Naive thymus-derived CD4-positive, alpha-beta T cell (primary cell): ENCODE measurements at regions of chr10 and their contacts with region 1.

Region 1: GRCh38 chr10:101353692-101354327 is at the start of gene BTRC:
- DNase-seq: peak; percentile 76 to 99 (median 98)
- ATAC-seq: peak; percentile 96
- H3K4me3 ChIP-seq: peak within 1 kb of the TSS; percentile 69
- H3K4me3 Mint-ChIP-seq: peak within 1 kb of the TSS; percentile 93 to 99 (median 98)
- H3K27ac ChIP-seq: peak within 1 kb of the TSS; percentile 94
- H3K27ac Mint-ChIP-seq: peak within 1 kb of the TSS; percentile 94 to 99 (median 98)
- H3K4me1 ChIP-seq: peaks cover 5 to 8% of the 10 kb centered on the region in 2 donors
- H3K4me1 Mint-ChIP-seq: peaks cover 15 to 41% (median 33%) of the 10 kb centered on the region in 7 donors
- H3K27me3 ChIP-seq: no peaks in the 10 kb centered on the region
- H3K27me3 Mint-ChIP-seq: peaks cover 5 to 19% (median 14%) of the 10 kb centered on the region in 5 donors
- total RNA-seq, gene BTRC: 14.7 to 26.1 (median 17.6) TPM

Region 2: GRCh38 chr10:99758211-99758891 is 1595.5 kb before region 1 on chr10:
- CTCF ChIA-PET with region 1: no interaction called
- POLR2A ChIA-PET with region 1: no interaction called
- intact Hi-C with region 1: no loop called
- DNase-seq: no peak
- ATAC-seq: no peak
- H3K4me3 ChIP-seq: no peak overlapping the region
- H3K4me3 Mint-ChIP-seq: no peak overlapping the region
- H3K27ac ChIP-seq: no peak overlapping the region
- H3K27ac Mint-ChIP-seq: no peak overlapping the region
- H3K4me1 ChIP-seq: no peaks in the 10 kb centered on the region
- H3K4me1 Mint-ChIP-seq: no peaks in the 10 kb centered on the region
- H3K27me3 ChIP-seq: no peaks in the 10 kb centered on the region
- H3K27me3 Mint-ChIP-seq: no peaks in the 10 kb centered on the region

Region 3: GRCh38 chr10:100535715-100536353 is 818.0 kb before region 1 on chr10 and contains the start of gene HIF1AN:
- CTCF ChIA-PET with region 1: no interaction called
- POLR2A ChIA-PET with region 1: no interaction called
- intact Hi-C with region 1: loop called (anchors 5 to 10 kb)
- DNase-seq: peak; percentile 70 to 95 (median 91)
- ATAC-seq: peak; percentile 100
- H3K4me3 ChIP-seq: peak within 1 kb of the TSS; percentile 73
- H3K4me3 Mint-ChIP-seq: peak within 1 kb of the TSS in 1 of 10 donors; percentile 9
- H3K27ac ChIP-seq: peak within 1 kb of the TSS; percentile 85
- H3K27ac Mint-ChIP-seq: peak within 1 kb of the TSS in 1 of 9 donors; percentile 57
- H3K4me1 ChIP-seq: peaks cover 24 to 27% of the 10 kb centered on the region in 2 donors
- H3K4me1 Mint-ChIP-seq: peaks cover 0 to 29% (median 10%) of the 10 kb centered on the region in 7 donors
- H3K27me3 ChIP-seq: no peaks in the 10 kb centered on the region
- H3K27me3 Mint-ChIP-seq: no peaks in the 10 kb centered on the region
- total RNA-seq, gene HIF1AN: 43.3 to 74.9 (median 54.8) TPM

Region 4: DNA sequence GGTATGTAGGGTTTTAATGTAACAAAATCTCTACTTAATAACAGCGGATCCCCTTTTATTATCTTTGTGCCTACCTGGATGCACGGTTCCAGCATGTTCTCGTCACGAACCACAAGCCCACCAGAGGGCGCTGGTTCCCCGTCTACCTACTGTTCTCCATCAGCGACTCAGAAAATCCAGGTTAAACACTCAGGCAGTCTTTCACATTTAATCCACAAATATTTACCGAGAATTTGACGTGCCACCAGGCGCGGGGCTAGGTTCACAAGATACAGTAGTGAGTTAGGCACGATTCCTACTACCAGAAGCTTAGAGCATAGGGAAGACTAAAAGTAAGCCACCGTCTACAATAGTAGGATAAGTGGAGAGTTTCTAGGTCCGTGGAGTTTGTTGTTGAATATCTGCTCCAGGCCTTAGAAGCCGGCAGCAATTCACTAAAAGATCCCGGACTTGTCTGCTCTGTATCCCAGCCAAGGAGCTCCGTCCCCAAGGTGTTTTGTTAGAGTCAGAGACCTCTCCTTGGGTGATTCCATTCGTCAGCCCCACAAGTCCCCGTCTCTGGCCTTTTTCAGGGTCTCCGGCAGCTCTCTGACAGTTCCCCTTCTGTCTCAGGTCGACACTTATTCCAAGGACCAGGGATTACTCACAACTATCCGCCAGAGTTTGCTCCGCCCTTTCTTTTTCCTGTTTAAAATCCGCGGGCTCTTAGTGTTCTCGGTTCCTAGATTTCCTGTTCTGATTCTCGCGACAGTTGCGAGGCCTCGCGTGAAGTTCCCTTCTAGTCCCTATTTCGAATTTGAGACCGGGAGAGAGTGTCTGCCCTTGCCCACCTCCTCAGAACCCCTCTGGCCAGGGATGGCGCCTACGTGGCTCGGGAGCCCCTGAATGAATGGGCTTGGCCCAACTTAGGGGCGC is 293.5 kb before region 1 on chr10:
- CTCF ChIA-PET with region 1: no interaction called
- POLR2A ChIA-PET with region 1: no interaction called
- intact Hi-C with region 1: loop called (anchors 1 to 2 kb)
- DNase-seq: peak; percentile 70 to 97 (median 94)
- ATAC-seq: peak; percentile 82
- H3K4me3 ChIP-seq: peak overlapping the region; percentile 96
- H3K4me3 Mint-ChIP-seq: peak overlapping the region; percentile 90 to 99 (median 96)
- H3K27ac ChIP-seq: peak overlapping the region; percentile 96
- H3K27ac Mint-ChIP-seq: peak overlapping the region; percentile 86 to 98 (median 93)
- H3K4me1 ChIP-seq: peaks cover 12 to 21% of the 10 kb centered on the region in 2 donors
- H3K4me1 Mint-ChIP-seq: peaks cover 16 to 61% (median 31%) of the 10 kb centered on the region in 7 donors
- H3K27me3 ChIP-seq: peaks cover 5 to 18% of the 10 kb centered on the region in 2 donors
- H3K27me3 Mint-ChIP-seq: peaks cover 15 to 23% (median 18%) of the 10 kb centered on the region in 5 donors

Region 5: DNA sequence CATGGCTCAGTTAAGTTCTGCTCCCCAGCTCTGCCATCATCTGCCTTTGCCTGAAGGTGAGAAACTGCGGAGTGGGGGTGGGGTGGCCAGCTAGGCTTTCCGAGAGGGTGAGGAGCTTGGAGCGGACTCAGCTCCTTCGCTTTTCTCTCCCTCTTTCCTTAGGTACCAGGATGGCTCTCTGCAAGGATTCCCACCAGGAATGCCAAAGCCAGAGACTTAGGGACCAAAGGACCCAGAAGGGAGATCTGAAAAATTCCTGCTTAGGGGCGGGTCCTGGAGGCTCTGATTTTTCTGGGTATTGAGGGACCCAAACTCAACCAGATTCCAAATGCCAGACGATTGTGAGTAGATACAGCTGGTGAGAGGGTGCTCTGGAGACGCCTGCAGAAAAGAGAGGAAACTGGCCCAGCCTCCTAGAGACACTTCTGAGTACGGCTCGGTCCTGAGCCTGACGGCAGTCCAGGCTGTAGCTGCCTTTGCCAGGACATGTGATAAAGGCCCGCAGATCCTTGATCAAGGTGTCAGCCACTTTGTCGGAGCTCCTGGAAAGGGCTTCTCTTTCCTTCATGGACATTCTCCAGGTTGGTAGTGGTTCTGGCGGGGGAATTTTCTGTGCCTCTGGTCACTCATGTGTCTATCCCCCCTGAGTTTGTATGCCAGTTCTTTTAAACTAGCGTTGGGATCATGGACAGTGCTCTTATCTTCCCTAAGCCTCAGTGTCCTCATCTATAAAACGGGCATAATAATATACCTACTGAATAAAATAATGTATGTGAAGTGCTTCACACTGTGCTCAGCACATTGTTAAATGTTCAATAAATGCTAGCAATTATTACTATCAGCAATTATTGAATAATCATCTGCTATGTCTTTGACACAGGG is 42.4 kb before region 1 on chr10:
- CTCF ChIA-PET with region 1: no interaction called
- POLR2A ChIA-PET with region 1: no interaction called
- intact Hi-C with region 1: no loop called
- DNase-seq: no peak
- ATAC-seq: no peak
- H3K4me3 ChIP-seq: peak overlapping the region; percentile 24
- H3K4me3 Mint-ChIP-seq: peak overlapping the region; percentile 27 to 85 (median 78)
- H3K27ac ChIP-seq: no peak overlapping the region
- H3K27ac Mint-ChIP-seq: no peak overlapping the region
- H3K4me1 ChIP-seq: no peaks in the 10 kb centered on the region
- H3K4me1 Mint-ChIP-seq: peaks cover 7 to 16% (median 11%) of the 10 kb centered on the region in 7 donors
- H3K27me3 ChIP-seq: peaks cover 2 to 4% of the 10 kb centered on the region in 2 donors
- H3K27me3 Mint-ChIP-seq: peaks cover 50 to 80% (median 60%) of the 10 kb centered on the region in 5 donors

Region 6: DNA sequence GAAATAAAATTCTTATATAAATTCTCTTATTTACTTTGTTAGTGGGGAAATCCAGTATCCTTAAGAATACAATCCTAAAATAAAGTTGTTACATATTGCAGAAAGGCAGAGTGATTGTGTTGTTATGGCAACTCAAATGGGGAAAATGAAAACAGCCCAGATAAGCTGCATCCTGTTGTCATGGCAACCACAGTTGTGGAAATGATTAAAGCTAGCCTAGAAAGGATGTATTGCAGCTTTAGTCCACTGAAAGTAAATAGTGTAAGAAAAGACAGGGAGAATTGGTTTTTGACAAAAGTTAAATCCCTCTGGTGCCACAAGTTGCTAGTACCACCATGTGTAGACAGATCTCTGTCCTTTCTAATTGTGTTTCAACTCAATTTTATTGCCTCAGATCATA is 43.3 kb after region 1 on chr10:
- CTCF ChIA-PET with region 1: no interaction called
- POLR2A ChIA-PET with region 1: no interaction called
- intact Hi-C with region 1: loop called in 1 of 2 experiments (anchors 1 kb)
- DNase-seq: peak in 7 of 9 donors; percentile 34 to 74 (median 61)
- ATAC-seq: peak; percentile 79
- H3K4me3 ChIP-seq: no peak overlapping the region
- H3K4me3 Mint-ChIP-seq: no peak overlapping the region
- H3K27ac ChIP-seq: no peak overlapping the region
- H3K27ac Mint-ChIP-seq: peak overlapping the region in 4 of 9 donors; percentile 11 to 68 (median 52)
- H3K4me1 ChIP-seq: peaks cover 0 to 2% of the 10 kb centered on the region in 2 donors
- H3K4me1 Mint-ChIP-seq: peaks cover 4 to 54% (median 26%) of the 10 kb centered on the region in 7 donors
- H3K27me3 ChIP-seq: no peaks in the 10 kb centered on the region
- H3K27me3 Mint-ChIP-seq: no peaks in the 10 kb centered on the region

Region 7: DNA sequence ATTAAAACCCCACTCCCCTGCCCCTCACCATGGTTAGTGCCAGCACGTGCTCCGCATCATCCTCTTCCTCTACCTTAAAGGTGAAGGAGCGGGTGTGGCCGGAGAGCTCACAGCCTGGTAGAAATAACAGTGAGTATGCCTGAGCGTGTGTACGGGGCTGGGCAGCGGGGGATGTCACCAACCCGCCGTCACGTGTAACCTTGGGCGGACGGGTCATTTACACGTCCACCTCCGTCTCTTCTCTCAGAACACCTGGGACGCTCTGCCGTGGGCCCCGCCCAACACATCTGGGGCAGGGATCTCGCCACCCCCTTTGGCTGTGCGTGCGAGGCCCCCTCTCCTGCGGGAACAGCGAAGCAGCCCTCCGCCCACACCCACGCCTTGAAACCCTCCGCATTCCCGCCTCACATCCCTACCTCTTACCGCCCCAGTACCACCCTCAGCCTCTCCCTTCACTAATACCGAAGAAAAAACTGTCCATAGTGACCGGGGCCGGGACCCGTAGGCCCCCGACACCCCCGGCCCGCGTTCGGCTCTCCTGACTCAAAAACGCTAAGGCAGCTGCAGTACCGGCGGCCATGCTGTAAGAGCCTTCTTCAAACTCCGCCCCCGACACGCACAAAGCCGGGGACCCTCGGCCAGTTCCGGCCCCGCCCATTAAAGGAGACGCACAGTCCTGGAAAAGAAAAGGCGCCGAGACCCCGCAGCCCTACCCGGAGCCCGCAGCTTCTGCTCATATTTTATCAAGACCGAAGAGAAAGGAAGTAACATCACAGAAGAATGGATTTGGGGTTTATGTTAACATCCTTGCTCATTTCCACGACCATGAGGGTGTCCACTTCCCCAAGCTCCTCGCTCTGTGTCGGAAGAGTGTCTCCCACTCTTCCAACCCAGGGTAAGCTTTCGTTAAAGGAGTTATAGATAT is 429.3 kb after region 1 on chr10 and contains the start of gene NPM3:
- CTCF ChIA-PET with region 1: no interaction called
- POLR2A ChIA-PET with region 1: no interaction called
- intact Hi-C with region 1: loop called in 1 of 2 experiments (anchors 1 kb)
- DNase-seq: peak in 8 of 9 donors; percentile 68 to 84 (median 77)
- ATAC-seq: peak; percentile 82
- H3K4me3 ChIP-seq: peak within 1 kb of the TSS; percentile 68
- H3K4me3 Mint-ChIP-seq: peak within 1 kb of the TSS; percentile 92 to 100 (median 99)
- H3K27ac ChIP-seq: peak within 1 kb of the TSS; percentile 81
- H3K27ac Mint-ChIP-seq: peak within 1 kb of the TSS; percentile 65 to 98 (median 96)
- H3K4me1 ChIP-seq: peaks cover 32 to 49% of the 10 kb centered on the region in 2 donors
- H3K4me1 Mint-ChIP-seq: peaks cover 36 to 76% (median 61%) of the 10 kb centered on the region in 7 donors
- H3K27me3 ChIP-seq: peaks cover 0 to 11% of the 10 kb centered on the region in 2 donors
- H3K27me3 Mint-ChIP-seq: peaks cover 8 to 17% (median 10%) of the 10 kb centered on the region in 5 donors
- total RNA-seq, gene NPM3: 10.9 to 31.3 (median 16.2) TPM

Region 8: GRCh38 chr10:102132563-102133372 is 779.0 kb after region 1 on chr10 and contains the start of gene PPRC1:
- CTCF ChIA-PET with region 1: no interaction called
- POLR2A ChIA-PET with region 1: no interaction called
- intact Hi-C with region 1: loop called in 1 of 2 experiments (anchors 5 kb)
- DNase-seq: peak; percentile 88 to 98 (median 97)
- ATAC-seq: peak; percentile 97
- H3K4me3 ChIP-seq: peak within 1 kb of the TSS; percentile 80
- H3K4me3 Mint-ChIP-seq: peak within 1 kb of the TSS; percentile 90 to 99 (median 98)
- H3K27ac ChIP-seq: peak within 1 kb of the TSS; percentile 89
- H3K27ac Mint-ChIP-seq: peak within 1 kb of the TSS; percentile 89 to 99 (median 96)
- H3K4me1 ChIP-seq: peaks cover 15 to 26% of the 10 kb centered on the region in 2 donors
- H3K4me1 Mint-ChIP-seq: peaks cover 29 to 53% (median 47%) of the 10 kb centered on the region in 7 donors
- H3K27me3 ChIP-seq: no peaks in the 10 kb centered on the region
- H3K27me3 Mint-ChIP-seq: no peaks in the 10 kb centered on the region
- total RNA-seq, gene PPRC1: 33.7 to 56.5 (median 40.6) TPM